WTC11 (cell line): ENCODE measurements at regions of chr19 and their contacts with region 1.

Region 1: GRCh38 chr19:6862673-6863078 is 24.7 kb upstream of the ADGRE1 start:
- DNase-seq: peak; percentile 89
- ATAC-seq: peak; percentile 90
- H3K4me3 Mint-ChIP-seq: peak overlapping the region; percentile 65
- H3K27ac Mint-ChIP-seq: no peak overlapping the region
- H3K4me1 Mint-ChIP-seq: peaks cover 4% of the 10 kb centered on the region
- H3K27me3 Mint-ChIP-seq: peaks cover 3% of the 10 kb centered on the region; the same call in 1 of the 2 replicates
- CTCF ChIP-seq: peak; percentile 82

Region 2: GRCh38 chr19:6753178-6754031 is 109.3 kb before region 1 on chr19:
- CTCF ChIA-PET with region 1: interaction called, 22 read pairs
- POLR2A ChIA-PET with region 1: no interaction called
- DNase-seq: peak; percentile 99
- ATAC-seq: peak; percentile 93
- H3K4me3 Mint-ChIP-seq: peak overlapping the region; percentile 80
- H3K27ac Mint-ChIP-seq: peak overlapping the region; percentile 98
- H3K4me1 Mint-ChIP-seq: peaks cover 5% of the 10 kb centered on the region; the same call in 1 of the 2 replicates
- H3K27me3 Mint-ChIP-seq: no peaks in the 10 kb centered on the region
- CTCF ChIP-seq: no peak

Region 3: DNA sequence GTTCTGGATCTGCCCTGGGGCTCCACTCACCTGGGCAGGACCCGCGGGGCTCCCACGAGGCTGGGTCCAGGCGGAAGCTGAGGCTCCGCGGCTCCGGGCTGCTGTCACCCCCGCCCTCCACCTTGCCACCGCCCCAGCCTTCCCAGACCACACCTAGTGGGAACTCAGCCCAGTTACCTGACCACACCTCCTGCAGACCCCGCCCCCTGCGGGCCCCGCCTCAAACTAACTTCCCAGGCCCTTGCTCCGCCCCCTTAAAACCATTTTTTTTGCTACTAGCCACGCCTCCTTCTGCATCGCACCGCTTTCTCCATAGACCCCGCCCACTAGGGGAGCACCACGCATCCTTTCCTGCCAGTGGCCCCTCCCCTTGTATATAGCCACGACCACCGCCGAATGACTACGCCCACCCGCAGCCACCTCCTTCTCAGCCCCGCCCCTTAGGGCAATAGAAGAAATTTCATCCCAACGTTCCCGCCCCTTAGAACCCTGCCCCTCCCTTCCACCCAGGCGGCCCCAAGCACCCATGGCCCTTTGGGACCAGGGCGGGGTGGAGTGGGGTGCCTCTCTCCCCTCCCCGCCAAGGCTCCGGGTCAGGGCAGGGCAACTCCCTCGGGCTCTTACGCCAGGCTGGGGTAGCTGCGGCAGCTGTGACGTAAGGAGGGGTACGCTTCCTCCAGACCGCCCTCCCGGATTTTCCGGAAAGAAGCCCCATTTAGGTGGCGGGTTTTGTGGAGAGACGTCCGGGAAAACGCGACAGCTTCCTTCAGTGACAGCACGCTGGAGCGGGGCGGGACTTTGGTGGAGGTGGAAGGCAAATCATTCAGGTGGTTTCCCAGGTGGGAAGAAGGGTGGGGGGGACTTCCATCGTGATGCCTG is 95.1 kb before region 1 on chr19 and contains the start of gene SH2D3A:
- CTCF ChIA-PET with region 1: interaction called, 26 read pairs
- POLR2A ChIA-PET with region 1: no interaction called
- DNase-seq: peak; percentile 97
- ATAC-seq: peak; percentile 83
- H3K4me3 Mint-ChIP-seq: peak within 1 kb of the TSS; percentile 89
- H3K27ac Mint-ChIP-seq: peak within 1 kb of the TSS; percentile 100
- H3K4me1 Mint-ChIP-seq: peaks cover 20% of the 10 kb centered on the region
- H3K27me3 Mint-ChIP-seq: no peaks in the 10 kb centered on the region; the same call in 1 of the 2 replicates
- CTCF ChIP-seq: no peak
- total RNA-seq, gene SH2D3A: 25.1 to 30.3 TPM (median 26.7 TPM) in 3 replicates